ENCODE measurements at regions of chr7 and their contacts with region 1.

Region 1: DNA sequence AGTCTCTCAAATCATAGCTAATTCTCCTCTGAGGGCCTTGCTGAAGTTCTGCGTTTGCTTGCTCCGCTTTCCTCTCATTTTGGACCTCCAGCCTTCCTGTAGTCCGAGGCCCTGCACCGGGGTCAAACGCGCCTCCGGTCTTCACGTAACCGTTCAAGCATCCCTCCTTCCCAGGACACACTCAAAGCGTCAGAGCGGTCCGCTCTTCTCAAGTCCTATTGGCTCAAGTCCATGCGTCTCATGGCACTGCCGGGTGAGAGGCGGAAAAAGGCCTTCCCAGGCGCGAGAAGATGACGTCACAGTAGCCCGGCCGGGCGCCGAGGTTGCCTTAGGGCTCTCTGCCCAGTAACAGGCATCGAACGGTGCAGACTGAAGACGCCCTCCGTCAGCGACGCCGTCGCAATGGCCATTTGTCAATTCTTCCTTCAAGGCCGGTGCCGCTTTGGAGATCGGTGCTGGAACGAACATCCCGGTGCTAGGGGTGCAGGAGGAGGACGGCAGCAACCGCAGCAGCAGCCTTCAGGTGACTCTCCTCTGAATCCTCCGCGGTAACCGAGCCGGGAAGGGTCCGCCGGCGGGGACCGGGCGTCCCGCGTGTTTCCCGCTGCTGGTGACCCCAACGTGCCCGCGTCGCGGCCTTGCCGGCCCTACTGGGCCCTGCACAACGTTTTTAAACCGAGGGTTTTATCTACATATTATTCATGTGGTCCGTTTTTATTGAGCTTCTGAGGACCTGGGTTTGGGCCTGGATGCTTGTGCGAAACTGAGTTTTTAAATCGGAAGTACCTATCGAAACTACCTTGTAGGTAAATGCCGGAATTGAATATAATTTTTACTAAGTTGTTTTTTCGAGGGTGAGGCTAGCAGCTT is at the start of gene NUP42:
- DNase-seq: peak; percentile 99
- ATAC-seq: peak; percentile 98
- H3K4me3 ChIP-seq: peak within 1 kb of the TSS; percentile 89 to 98 (median 92)
- H3K27ac ChIP-seq: peak within 1 kb of the TSS; percentile 90
- H3K4me1 ChIP-seq: peaks cover 34% of the 10 kb centered on the region
- H3K27me3 ChIP-seq: no peaks in the 10 kb centered on the region; a peak in 1 of 5 replicates
- CTCF ChIP-seq: peak; percentile 22; the same call in 1 of the 2 replicates
- EP300 ChIP-seq: peak in 1 of 2 experiments; percentile 57; a peak in 2 of 4 replicates
- POLR2A ChIP-seq: peak; percentile 90 to 94
- RAD21 ChIP-seq: no peak; the same call in 1 of the 2 replicates
- total RNA-seq, gene NUP42: 51.5 and 52.4 TPM in 2 replicates

Region 2: GRCh38 chr7:23093546-23093945 is 88.4 kb before region 1 on chr7:
- CTCF ChIA-PET with region 1: no interaction called
- POLR2A ChIA-PET with region 1: no interaction called
- in situ Hi-C with region 1: no loop called
- intact Hi-C with region 1: loop called (anchors 5 kb)
- DNase-seq: no peak
- ATAC-seq: no peak
- H3K4me3 ChIP-seq: no peak overlapping the region
- H3K27ac ChIP-seq: no peak overlapping the region
- H3K4me1 ChIP-seq: no peaks in the 10 kb centered on the region
- H3K27me3 ChIP-seq: peaks cover 0 to 6% of the 10 kb centered on the region in 2 experiments; a peak in 1 of 5 replicates
- CTCF ChIP-seq: no peak
- EP300 ChIP-seq: no peak
- POLR2A ChIP-seq: no peak
- RAD21 ChIP-seq: no peak

Region 3: DNA sequence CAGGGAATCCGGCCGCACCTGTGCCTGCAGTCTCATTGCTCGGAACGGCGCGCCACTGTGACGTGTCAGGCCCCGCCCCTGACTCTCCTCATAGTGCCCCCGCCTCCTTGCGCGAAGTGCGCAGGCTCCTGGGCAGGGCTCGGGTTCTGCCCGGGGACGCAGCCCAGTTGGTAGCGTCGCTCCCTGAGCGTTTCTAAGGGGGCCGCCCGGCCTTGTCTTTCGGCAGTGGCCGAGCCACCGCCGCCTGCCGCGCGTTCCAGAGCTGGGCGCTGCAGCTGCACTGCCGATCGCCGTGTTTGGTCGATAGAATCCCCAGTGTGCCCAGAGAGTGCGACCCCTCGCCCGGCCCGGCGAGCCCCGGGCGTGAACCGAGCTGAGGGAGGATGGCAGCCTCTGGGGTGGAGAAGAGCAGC is 76.3 kb before region 1 on chr7 and contains the start of gene KLHL7:
- CTCF ChIA-PET with region 1: no interaction called
- POLR2A ChIA-PET with region 1: interaction called, 6 read pairs
- in situ Hi-C with region 1: loop called (anchors 5 kb)
- intact Hi-C with region 1: loop called (anchors 1 kb)
- DNase-seq: peak; percentile 88
- ATAC-seq: peak; percentile 98
- H3K4me3 ChIP-seq: peak within 1 kb of the TSS; percentile 88 to 97 (median 96)
- H3K27ac ChIP-seq: peak within 1 kb of the TSS; percentile 87
- H3K4me1 ChIP-seq: peaks cover 18% of the 10 kb centered on the region
- H3K27me3 ChIP-seq: no peaks in the 10 kb centered on the region; a peak in 1 of 5 replicates
- CTCF ChIP-seq: no peak; the same call in 1 of the 2 replicates
- EP300 ChIP-seq: no peak; a peak in 1 of 4 replicates
- POLR2A ChIP-seq: peak; percentile 87 to 97
- RAD21 ChIP-seq: no peak
- total RNA-seq, gene KLHL7: 34.4 and 43.2 TPM in 2 replicates

Region 4: GRCh38 chr7:23261843-23262452 is 80.0 kb after region 1 on chr7:
- CTCF ChIA-PET with region 1: no interaction called
- POLR2A ChIA-PET with region 1: no interaction called
- in situ Hi-C with region 1: no loop called
- intact Hi-C with region 1: loop called (anchors 2 kb)
- DNase-seq: peak; percentile 58
- ATAC-seq: peak; percentile 97
- H3K4me3 ChIP-seq: no peak overlapping the region; a peak in 1 of 6 replicates
- H3K27ac ChIP-seq: no peak overlapping the region
- H3K4me1 ChIP-seq: no peaks in the 10 kb centered on the region
- H3K27me3 ChIP-seq: peaks cover 3 to 26% of the 10 kb centered on the region in 2 experiments; a peak in 3 of 5 replicates
- CTCF ChIP-seq: peak; percentile 84
- EP300 ChIP-seq: no peak
- POLR2A ChIP-seq: no peak
- RAD21 ChIP-seq: peak; percentile 75

Region 5: GRCh38 chr7:23474094-23474828 is 292.3 kb after region 1 on chr7:
- CTCF ChIA-PET with region 1: no interaction called
- POLR2A ChIA-PET with region 1: no interaction called
- in situ Hi-C with region 1: no loop called
- intact Hi-C with region 1: loop called (anchors 10 kb)
- DNase-seq: peak; percentile 96
- ATAC-seq: peak; percentile 80
- H3K4me3 ChIP-seq: peak overlapping the region; percentile 86 to 93 (median 91)
- H3K27ac ChIP-seq: peak overlapping the region; percentile 96
- H3K4me1 ChIP-seq: peaks cover 25% of the 10 kb centered on the region
- H3K27me3 ChIP-seq: no peaks in the 10 kb centered on the region; a peak in 1 of 5 replicates
- CTCF ChIP-seq: peak; percentile 13; the same call in 1 of the 2 replicates
- EP300 ChIP-seq: 0 out of 4 replicates have a peak, but pooled peaks of 1 of the 2 experiments have one; percentile 5
- POLR2A ChIP-seq: peak in 1 of 2 experiments; percentile 74; a peak in 1 of 4 replicates
- RAD21 ChIP-seq: no peak; the same call in 1 of the 2 replicates

Region 6: DNA sequence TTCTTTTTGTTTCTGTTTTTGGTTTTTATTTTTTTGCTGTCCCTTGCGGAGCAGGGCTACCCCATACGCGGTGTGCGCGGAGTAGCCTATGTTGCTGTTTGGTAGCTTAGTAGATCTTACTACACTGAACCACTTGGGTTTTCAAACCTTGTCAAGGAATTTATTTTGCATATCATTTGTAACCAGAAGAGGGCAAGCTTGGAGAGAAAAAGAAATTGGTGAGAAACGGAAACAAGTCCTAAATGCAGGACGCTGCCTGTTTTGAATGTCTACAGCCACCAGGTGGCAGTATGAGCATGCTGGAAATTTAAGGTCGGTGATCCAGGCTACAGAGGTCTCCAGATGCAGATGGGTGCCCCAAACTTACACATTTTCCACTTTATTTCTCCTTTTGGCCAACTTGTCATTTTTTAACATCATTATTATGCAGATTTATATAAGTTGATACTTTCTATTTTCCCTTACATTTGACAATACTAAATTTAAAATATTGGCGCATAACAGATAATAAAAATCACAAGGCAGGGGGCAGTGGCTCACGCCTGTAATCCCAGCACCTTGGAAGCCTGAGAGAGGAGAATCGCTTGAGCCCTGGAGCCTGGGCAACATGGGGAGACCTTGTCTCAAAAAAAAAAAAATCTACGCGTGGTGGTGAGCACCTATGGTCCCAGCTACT is 365.1 kb after region 1 on chr7:
- CTCF ChIA-PET with region 1: no interaction called
- POLR2A ChIA-PET with region 1: no interaction called
- in situ Hi-C with region 1: no loop called
- intact Hi-C with region 1: loop called (anchors 10 kb)
- DNase-seq: peak; percentile 87
- ATAC-seq: peak; percentile 83
- H3K4me3 ChIP-seq: no peak overlapping the region
- H3K27ac ChIP-seq: no peak overlapping the region
- H3K4me1 ChIP-seq: peaks cover 7% of the 10 kb centered on the region; the same call in 1 of the 2 replicates
- H3K27me3 ChIP-seq: peaks cover 0 to 2% of the 10 kb centered on the region in 2 experiments; a peak in 1 of 5 replicates
- CTCF ChIP-seq: peak; percentile 86
- EP300 ChIP-seq: no peak
- POLR2A ChIP-seq: no peak
- RAD21 ChIP-seq: peak; percentile 82